ENCODE measurements at regions of chr16 and their contacts with region 1.

Region 1: GRCh38 chr16:72241930-72242329 is 70.0 kb upstream of the PMFBP1 start:
- DNase-seq: no peak
- ATAC-seq: peak; percentile 53 to 71 (median 56)
- H3K4me3 ChIP-seq: no peak overlapping the region
- H3K27ac ChIP-seq: no peak overlapping the region
- H3K4me1 ChIP-seq: no peaks in the 10 kb centered on the region
- H3K27me3 ChIP-seq: peaks cover 0 to 14% (median 0%) of the 10 kb centered on the region in 9 donors
- CTCF ChIP-seq: peak; percentile 24 to 57 (median 43)
- POLR2A ChIP-seq: no peak

Region 2: DNA sequence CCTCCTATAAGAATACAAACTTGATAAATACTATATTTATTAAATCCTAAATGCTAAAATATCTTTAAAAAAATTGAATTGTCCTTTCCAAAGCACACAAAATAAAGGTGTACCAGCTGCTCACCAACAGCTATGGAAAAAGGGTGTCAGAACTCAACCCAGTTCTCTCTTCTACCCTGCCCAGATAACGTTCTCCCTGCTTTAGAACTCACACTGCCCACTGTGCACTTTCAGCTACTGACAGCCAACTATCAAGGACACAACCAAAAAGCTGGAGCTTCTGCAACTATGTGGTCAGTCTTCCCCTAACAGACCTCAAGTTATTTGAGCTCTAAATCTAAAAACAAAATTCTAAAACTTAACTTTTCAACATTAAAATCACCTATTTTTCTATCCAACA is 447.0 kb before region 1 on chr16:
- intact Hi-C with region 1: no loop called
- DNase-seq: no peak
- ATAC-seq: peak in 3 of 4 donors; percentile 42 to 56 (median 54)
- H3K4me3 ChIP-seq: no peak overlapping the region
- H3K27ac ChIP-seq: no peak overlapping the region
- H3K4me1 ChIP-seq: peaks cover 0 to 56% (median 17%) of the 10 kb centered on the region in 12 donors
- H3K27me3 ChIP-seq: no peaks in the 10 kb centered on the region
- CTCF ChIP-seq: no peak
- POLR2A ChIP-seq: no peak

Region 3: GRCh38 chr16:72182976-72183375 is 59.0 kb before region 1 on chr16:
- intact Hi-C with region 1: no loop called
- DNase-seq: no peak
- ATAC-seq: no peak
- H3K4me3 ChIP-seq: no peak overlapping the region
- H3K27ac ChIP-seq: no peak overlapping the region
- H3K4me1 ChIP-seq: no peaks in the 10 kb centered on the region
- H3K27me3 ChIP-seq: no peaks in the 10 kb centered on the region
- CTCF ChIP-seq: no peak
- POLR2A ChIP-seq: no peak

Region 4: DNA sequence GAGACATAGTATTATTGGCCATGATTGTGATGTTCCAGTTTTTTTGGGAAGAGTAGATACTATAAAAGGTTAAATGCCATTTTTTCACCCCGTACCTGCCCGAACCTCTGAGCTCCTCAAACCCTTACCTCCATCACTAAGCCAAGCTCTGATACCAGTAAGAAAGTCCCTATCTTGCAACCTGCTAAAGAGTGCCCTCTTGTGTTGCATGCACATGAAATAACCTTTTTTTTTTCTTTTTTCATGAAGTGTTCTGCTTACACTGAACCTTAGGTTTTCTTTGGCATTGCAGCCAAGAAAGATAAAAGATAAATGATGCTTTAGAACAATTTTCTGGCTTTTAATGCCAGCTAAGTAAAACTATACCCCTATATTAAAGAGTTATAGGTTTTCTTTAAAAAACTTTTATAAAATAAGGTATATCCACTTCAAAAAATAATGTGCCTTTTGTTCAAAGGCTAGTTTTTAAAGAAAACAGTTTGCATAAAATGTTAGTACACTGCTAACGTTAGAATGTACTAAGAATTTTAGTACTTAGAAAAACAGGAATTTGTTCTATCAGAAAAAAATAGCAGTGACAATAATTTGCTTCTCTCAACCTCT is 225.3 kb after region 1 on chr16:
- intact Hi-C with region 1: loop called in 1 of 10 experiments (anchors 5 kb)
- DNase-seq: no peak
- ATAC-seq: no peak
- H3K4me3 ChIP-seq: no peak overlapping the region
- H3K27ac ChIP-seq: no peak overlapping the region
- H3K4me1 ChIP-seq: no peaks in the 10 kb centered on the region
- H3K27me3 ChIP-seq: no peaks in the 10 kb centered on the region
- CTCF ChIP-seq: peak in 10 of 12 donors; percentile 17 to 51 (median 32)
- POLR2A ChIP-seq: no peak

Measured in heart left ventricle (tissue), 16 donors.